Activated CD8-positive, alpha-beta T cell treated with anti-CD3 and anti-CD28 coated beads, Interleukin-2, amount 10 ng/mL, durations not matched to agents 7 days and 5 days (primary cell): ENCODE measurements at regions of chr14 and their contacts with region 1.

Region 1: DNA sequence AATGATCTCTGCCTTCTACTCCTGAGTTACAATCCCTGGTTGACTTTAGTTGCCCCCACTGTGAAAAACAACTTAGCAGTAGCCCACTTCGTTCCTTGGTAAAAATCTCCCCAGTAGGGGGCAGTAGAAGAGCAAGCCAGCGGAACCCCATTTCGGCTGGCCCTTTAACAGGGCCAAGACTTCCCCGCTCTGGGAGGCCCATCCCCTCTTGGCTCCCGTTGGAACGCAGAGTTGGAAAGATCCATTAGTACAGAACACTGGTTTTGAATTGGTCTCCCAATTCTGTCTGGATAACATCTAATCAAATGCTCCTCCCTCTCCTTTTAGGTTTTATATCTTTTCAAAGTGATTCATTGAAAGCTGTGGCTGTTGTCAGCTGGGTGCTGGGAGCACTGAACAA is 1133.3 kb downstream of the BCL11B start:
- DNase-seq: peak; percentile 81
- ATAC-seq: peak; percentile 70
- H3K4me3 Mint-ChIP-seq: peak overlapping the region; percentile 9
- H3K27ac Mint-ChIP-seq: peak overlapping the region; percentile 66
- H3K4me1 Mint-ChIP-seq: peaks cover 81% of the 10 kb centered on the region
- H3K27me3 Mint-ChIP-seq: no peaks in the 10 kb centered on the region

Region 2: GRCh38 chr14:97978341-97978740 is 160.3 kb before region 1 on chr14:
- CTCF ChIA-PET with region 1: interaction called, 114 read pairs
- POLR2A ChIA-PET with region 1: interaction called, 54 read pairs
- DNase-seq: peak; percentile 86
- ATAC-seq: peak; percentile 90
- H3K4me3 Mint-ChIP-seq: peak overlapping the region; percentile 93
- H3K27ac Mint-ChIP-seq: peak overlapping the region; percentile 95
- H3K4me1 Mint-ChIP-seq: peaks cover 52% of the 10 kb centered on the region
- H3K27me3 Mint-ChIP-seq: no peaks in the 10 kb centered on the region

Region 3: DNA sequence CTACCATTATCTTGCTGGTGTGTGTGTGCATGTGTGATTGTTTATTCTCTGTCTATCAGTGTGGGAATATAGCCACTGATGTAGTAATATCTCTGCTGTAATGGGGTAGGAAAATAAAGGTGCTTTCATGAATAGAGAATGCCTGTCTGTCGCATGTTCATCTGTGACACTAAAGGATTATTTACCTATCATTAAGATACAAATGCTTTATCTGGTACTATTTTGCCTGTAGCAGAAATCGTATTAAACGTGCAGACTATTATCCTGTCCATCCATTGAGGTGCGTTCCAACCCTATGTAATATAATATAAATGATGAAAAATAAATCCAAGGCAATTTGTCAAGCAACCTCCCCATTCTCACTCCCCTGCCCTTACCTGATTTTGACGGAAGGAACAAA is 81.7 kb before region 1 on chr14:
- CTCF ChIA-PET with region 1: no interaction called
- POLR2A ChIA-PET with region 1: no interaction called
- DNase-seq: no peak
- ATAC-seq: no peak
- H3K4me3 Mint-ChIP-seq: no peak overlapping the region
- H3K27ac Mint-ChIP-seq: no peak overlapping the region
- H3K4me1 Mint-ChIP-seq: no peaks in the 10 kb centered on the region
- H3K27me3 Mint-ChIP-seq: no peaks in the 10 kb centered on the region

Region 4: DNA sequence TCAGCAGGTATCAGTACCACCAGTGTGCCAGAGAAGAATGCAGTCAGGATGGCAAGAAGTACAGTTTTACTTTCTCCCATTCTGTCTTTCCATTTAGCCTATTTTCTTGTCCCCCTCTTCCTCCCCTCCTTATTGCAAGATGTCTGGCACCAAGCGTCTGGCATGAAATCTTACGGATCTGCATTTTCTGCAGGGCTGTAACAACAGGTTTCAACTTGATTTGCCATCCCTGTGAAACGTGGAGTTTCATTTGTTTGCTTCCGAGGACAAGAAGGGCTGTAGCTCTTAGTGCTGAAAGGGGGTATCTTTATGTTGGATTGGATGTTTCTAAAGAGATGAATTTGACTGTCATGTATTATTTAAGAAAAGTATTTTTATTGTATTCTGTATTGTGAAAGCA is 22.7 kb after region 1 on chr14:
- CTCF ChIA-PET with region 1: interaction called, 66 read pairs
- POLR2A ChIA-PET with region 1: no interaction called
- DNase-seq: peak; percentile 18
- ATAC-seq: no peak
- H3K4me3 Mint-ChIP-seq: peak overlapping the region; percentile 43
- H3K27ac Mint-ChIP-seq: peak overlapping the region; percentile 80
- H3K4me1 Mint-ChIP-seq: peaks cover 41% of the 10 kb centered on the region
- H3K27me3 Mint-ChIP-seq: no peaks in the 10 kb centered on the region

Region 5: GRCh38 chr14:98173305-98173704 is 34.6 kb after region 1 on chr14:
- CTCF ChIA-PET with region 1: interaction called, 66 read pairs
- POLR2A ChIA-PET with region 1: interaction called, 6 read pairs
- DNase-seq: peak; percentile 80
- ATAC-seq: peak; percentile 35
- H3K4me3 Mint-ChIP-seq: peak overlapping the region; percentile 70
- H3K27ac Mint-ChIP-seq: peak overlapping the region; percentile 84
- H3K4me1 Mint-ChIP-seq: peaks cover 95% of the 10 kb centered on the region
- H3K27me3 Mint-ChIP-seq: no peaks in the 10 kb centered on the region

Region 6: GRCh38 chr14:98198385-98198784 is 59.7 kb after region 1 on chr14:
- CTCF ChIA-PET with region 1: interaction called, 309 read pairs
- POLR2A ChIA-PET with region 1: interaction called, 6 read pairs
- DNase-seq: peak; percentile 81
- ATAC-seq: peak; percentile 80
- H3K4me3 Mint-ChIP-seq: peak overlapping the region; percentile 45
- H3K27ac Mint-ChIP-seq: peak overlapping the region; percentile 76
- H3K4me1 Mint-ChIP-seq: peaks cover 80% of the 10 kb centered on the region
- H3K27me3 Mint-ChIP-seq: no peaks in the 10 kb centered on the region

Region 7: GRCh38 chr14:98227000-98227726 is 88.5 kb after region 1 on chr14:
- CTCF ChIA-PET with region 1: interaction called, 20 read pairs
- POLR2A ChIA-PET with region 1: no interaction called
- DNase-seq: peak; percentile 41
- ATAC-seq: peak; percentile 52
- H3K4me3 Mint-ChIP-seq: no peak overlapping the region
- H3K27ac Mint-ChIP-seq: peak overlapping the region; percentile 76
- H3K4me1 Mint-ChIP-seq: peaks cover 67% of the 10 kb centered on the region
- H3K27me3 Mint-ChIP-seq: no peaks in the 10 kb centered on the region

Region 8: DNA sequence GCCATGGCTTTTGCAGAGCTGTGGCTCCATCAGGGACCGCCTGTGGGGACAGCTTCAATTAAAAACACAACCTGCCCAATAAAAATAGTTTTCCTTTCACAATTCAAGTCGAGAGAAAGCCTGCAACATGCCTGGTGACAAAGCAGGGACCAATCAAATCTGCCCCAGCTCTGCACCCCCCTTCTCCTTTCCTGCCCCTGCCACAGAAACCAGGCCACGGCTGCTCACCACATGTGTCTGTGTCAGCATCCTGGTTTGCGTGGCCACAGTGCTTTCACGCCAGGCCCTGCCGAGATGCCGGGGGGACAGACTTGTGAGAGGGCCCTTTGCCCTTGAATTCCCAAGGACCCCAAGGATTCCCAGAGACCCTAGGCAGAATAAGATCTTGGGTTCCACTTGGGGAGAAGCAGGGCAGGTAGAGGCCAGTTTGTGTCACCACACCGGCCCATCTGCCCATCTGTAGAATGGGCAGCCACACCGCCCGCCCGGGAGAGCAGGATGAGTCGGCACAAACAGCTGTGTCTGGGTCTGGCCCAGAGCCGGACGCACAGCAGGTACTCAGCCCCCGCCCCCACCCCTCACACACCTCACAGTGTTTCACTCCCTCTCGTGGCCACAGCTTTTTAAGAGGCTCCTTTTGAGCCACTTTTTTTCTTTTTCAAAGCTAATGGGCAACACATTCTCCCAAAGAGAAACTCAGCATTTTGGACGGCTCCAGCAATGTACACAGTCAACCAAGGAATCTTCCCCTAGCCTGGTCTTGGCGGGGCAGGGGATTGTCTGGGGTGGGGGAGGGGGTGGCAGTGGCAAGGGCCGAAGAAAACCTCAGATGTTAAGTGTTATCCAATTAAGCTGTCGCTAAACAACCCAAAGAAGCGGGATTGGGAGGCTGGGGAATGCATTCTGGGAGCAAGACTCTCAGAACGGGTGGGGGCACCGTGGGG is 1091.8 kb after region 1 on chr14:
- CTCF ChIA-PET with region 1: interaction called, 14 read pairs
- POLR2A ChIA-PET with region 1: no interaction called
- DNase-seq: peak; percentile 93
- ATAC-seq: peak; percentile 60
- H3K4me3 Mint-ChIP-seq: peak overlapping the region; percentile 75
- H3K27ac Mint-ChIP-seq: peak overlapping the region; percentile 98
- H3K4me1 Mint-ChIP-seq: peaks cover 95% of the 10 kb centered on the region
- H3K27me3 Mint-ChIP-seq: no peaks in the 10 kb centered on the region